Posterior vena cava (tissue), 2 donors: ENCODE measurements at regions of chr7 and their contacts with region 1.

Region 1: DNA sequence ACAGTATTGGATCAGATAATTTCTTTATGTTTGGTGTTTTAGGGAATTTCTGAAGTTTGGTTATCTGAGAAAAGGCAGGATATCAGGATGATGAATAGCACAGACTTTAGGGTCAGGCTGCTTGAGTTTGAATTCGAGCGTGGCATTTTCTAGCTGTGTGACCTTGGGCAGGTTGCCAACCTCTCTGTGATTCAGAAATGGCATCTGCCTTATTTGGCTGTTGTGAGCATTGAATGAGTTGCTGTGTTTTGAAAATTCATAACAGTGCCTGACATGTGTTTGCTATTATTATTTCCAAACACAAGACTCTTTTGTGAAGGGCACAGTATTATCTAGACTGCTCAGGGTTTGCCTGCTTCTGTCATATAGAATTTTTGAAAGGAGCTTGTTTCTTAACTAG is 66.9 kb downstream of the NXPH1 start:
- DNase-seq: no peak

Region 2: DNA sequence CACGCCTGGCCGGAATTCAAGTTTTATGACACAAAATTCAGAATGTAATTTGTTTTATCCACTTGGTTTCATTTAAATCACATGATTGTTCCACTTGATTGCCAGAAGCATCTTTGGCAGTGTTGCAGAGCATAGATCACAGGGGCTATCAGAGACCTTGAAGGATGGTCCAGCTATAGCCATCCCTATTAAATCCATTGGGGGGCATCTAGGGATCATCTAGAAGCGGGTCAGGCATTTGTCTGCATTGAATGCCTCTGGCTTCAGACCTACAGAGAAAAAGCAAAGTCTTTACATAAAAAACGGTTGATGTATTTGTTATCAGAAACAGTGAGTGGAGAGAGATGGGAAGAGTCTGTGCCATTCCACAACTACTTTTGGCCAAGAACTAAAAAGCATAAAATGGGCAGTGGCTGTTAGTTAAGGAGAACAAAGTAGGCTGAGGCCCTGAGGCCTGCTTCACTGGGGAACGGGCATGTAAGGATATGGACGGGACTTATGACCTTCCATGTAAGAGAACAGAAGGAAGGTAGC is 79.4 kb after region 1 on chr7:
- intact Hi-C with region 1: loop called in 1 of 2 experiments (anchors 10 kb)
- DNase-seq: no peak

Region 3: DNA sequence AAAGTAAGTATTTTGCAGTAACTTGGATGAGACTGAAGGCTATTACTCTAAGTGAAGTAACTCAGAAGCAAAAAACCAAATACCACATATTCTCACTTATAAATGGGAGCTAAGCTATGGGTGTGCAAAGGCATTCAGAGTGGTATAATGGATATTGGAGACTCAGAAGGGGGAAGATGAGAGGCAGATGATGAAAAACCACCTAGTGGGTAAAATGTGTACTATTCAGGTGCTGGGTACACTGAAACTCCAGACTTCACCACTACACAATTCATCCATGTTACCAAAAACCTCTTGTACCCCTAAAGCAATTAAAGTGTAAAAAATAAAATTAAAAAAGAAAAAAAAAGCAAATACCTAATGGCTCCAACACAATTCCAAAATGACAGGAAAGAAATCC is 284.8 kb after region 1 on chr7:
- intact Hi-C with region 1: no loop called
- DNase-seq: no peak